Cardiac septum (tissue), 1 donor: ENCODE measurements at regions of chr2 and their contacts with region 1.

Region 1: GRCh38 chr2:231056453-231057424 is at the start of gene PSMD1:
- DNase-seq: peak; percentile 96
- total RNA-seq, gene PSMD1: 87.0 TPM

Region 2: GRCh38 chr2:230824406-230824978 is 232.2 kb before region 1 on chr2:
- intact Hi-C with region 1: loop called (anchors 5 kb)
- DNase-seq: no peak

Region 3: DNA sequence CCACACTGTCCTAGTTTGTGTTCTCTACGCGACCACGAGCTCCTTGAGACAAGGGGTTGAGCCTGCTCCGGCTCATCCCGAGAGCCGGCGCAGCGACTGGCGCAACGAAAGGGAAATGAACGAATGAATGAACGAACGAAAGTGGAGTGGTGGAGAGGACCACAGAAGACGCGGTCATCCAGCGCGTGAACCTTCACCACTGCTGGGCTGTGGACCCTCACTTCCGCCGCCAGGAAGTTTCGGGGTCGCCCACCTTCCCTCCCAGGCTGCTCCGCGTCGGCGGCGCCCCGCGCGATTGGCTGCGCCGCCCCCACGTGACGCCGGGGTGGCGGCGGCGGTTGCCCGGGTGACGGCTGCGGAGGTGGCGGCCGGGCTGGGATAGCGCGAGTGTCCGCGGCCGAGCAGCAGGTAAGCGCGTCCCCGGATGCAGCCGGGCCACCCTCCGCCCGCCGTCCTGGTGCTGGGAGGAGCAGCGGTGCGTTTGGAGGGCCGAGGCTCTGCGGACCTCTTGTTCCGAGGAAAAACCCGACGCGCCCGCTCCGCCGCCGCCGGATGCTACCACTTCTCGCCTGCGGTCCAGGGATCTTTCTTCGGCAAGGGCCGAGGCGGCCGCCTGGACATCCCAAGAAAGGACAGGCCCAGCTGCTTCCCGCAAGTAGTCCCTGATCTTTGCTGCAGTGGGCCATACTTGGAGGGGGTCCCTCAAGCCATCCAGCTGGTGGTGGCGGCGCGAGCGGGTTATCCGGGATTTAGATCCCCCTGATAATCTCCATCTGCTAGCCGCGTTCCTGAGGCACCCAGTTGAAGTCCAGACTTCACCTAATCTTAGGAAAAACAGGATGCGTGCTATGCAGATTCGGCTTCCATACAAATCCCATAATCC is 141.8 kb after region 1 on chr2 and contains the start of gene ARMC9:
- intact Hi-C with region 1: loop called (anchors 5 kb)
- DNase-seq: peak; percentile 89
- total RNA-seq, gene ARMC9: 3.9 TPM